Endothelial cell of umbilical vein (primary cell): ENCODE measurements at regions of chr1 and their contacts with region 1.

Region 1: GRCh38 chr1:28877132-28877781 is 37.1 kb upstream of the EPB41 start:
- DNase-seq: peak; percentile 73
- H3K4me3 ChIP-seq: no peak overlapping the region
- H3K27ac ChIP-seq: no peak overlapping the region
- H3K4me1 ChIP-seq: no peaks in the 10 kb centered on the region
- H3K27me3 ChIP-seq: no peaks in the 10 kb centered on the region
- CTCF ChIP-seq: peak; percentile 86 to 92
- POLR2A ChIP-seq: no peak

Region 2: DNA sequence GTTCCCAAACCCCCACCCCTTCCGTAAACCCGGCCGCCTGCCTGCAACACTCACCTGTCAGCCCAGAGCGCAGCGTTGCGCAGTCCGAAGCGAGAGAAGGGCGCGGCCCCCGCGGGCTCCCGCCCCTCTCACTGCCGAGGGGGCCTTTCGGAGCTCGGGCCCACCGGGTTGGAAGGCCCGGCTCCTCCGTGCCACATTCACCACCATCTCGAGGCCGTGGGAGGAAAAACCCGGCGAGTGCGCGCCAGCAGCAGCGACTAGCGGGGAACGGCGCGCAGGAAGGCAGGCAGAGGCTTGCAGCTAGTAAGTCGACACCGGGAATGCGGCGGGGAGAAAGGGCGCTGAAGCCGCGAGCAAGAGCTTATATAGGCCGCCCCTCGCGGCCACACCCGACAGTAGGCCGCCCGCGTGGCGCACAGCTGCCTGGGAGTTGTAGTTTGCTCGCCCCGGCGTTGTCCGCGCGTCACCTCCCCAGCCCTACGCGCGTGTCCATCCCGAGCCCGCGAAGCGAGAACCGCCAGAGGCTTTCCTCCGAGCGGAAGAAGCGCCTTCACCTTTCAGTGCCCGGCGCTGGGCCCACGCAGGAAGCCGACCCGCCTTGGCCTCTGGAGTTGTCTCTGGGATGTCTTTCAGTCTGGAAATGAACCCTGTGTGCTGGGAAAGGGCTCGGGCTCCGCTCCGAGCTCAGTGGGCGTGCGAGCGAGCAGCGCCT is 295.6 kb before region 1 on chr1:
- CTCF ChIA-PET with region 1: interaction called, 12 read pairs
- POLR2A ChIA-PET with region 1: interaction called, 5 read pairs
- dilution Hi-C with region 1: no loop called
- intact Hi-C with region 1: no loop called
- DNase-seq: peak; percentile 97
- H3K4me3 ChIP-seq: peak overlapping the region; percentile 75 to 98 (median 92)
- H3K27ac ChIP-seq: peak overlapping the region; percentile 65
- H3K4me1 ChIP-seq: peaks cover 31% of the 10 kb centered on the region
- H3K27me3 ChIP-seq: no peaks in the 10 kb centered on the region
- CTCF ChIP-seq: no peak
- POLR2A ChIP-seq: peak; percentile 100

Region 3: DNA sequence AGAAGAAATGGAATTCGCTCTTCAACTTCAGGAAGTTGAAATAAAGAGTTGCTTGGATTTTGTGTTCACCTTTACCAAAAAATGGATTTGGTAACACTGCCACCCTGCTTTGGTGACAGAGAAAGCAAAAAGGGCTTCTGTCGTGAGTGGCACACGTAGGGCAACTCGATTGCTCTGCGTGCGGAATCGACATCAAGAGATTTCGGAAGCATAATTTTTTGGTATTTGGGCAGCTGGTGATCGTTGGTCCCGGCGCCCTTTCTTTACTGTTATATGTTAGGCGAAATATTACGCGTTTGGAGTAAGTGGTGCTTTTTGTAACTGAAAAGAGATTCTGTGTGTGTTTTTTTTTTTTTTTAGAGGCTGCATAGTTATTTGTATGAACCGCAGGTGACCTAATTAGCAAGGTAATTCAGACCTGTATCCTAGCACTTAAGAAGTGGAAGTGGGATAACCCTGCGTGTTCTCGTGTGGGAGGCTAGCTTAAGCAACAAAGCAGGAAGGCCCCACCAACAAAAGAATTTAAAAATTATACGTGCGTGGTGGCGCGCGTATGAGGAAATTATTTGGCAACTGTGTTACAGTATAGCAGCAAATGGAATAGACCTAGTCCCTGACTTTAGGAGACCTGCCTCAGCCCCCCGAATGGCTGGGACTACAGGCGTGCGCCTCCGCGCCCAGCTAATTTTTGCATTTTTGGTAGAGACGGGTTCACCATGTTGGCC is 228.6 kb before region 1 on chr1 and contains the start of gene RNU11:
- CTCF ChIA-PET with region 1: interaction called, 13 read pairs
- POLR2A ChIA-PET with region 1: interaction called, 5 read pairs
- dilution Hi-C with region 1: no loop called
- intact Hi-C with region 1: loop called (anchors 1 kb)
- DNase-seq: peak; percentile 97
- H3K4me3 ChIP-seq: peak within 1 kb of the TSS in 2 of 3 experiments; percentile 18 to 20
- H3K27ac ChIP-seq: peak within 1 kb of the TSS; percentile 97
- H3K4me1 ChIP-seq: peaks cover 10% of the 10 kb centered on the region
- H3K27me3 ChIP-seq: no peaks in the 10 kb centered on the region
- CTCF ChIP-seq: no peak
- POLR2A ChIP-seq: peak; percentile 100
- total RNA-seq, gene RNU11: not detected in 2 replicates

Region 4: DNA sequence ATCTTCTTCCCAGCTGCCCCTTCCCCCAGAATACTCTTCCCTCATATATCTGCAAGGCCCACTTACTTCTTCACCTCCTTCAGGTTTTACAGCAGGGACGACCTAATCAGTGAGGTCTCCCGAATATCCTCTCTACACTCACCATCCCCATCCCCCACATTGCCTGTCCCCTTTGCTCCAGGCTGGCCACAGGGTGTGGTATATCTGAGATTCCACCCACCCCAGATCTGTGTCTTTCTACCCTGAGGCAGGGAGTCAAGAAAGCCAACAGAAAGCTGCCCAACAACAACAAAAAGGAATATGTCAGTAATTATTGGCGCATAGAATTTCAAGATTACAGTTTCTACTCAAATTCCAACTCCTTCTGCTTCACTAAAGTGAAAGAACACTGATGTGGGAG is 95.2 kb before region 1 on chr1:
- CTCF ChIA-PET with region 1: interaction called, 259 read pairs
- POLR2A ChIA-PET with region 1: no interaction called
- dilution Hi-C with region 1: no loop called
- intact Hi-C with region 1: loop called (anchors 1 kb)
- DNase-seq: no peak
- H3K4me3 ChIP-seq: no peak overlapping the region
- H3K27ac ChIP-seq: no peak overlapping the region
- H3K4me1 ChIP-seq: no peaks in the 10 kb centered on the region
- H3K27me3 ChIP-seq: no peaks in the 10 kb centered on the region
- CTCF ChIP-seq: no peak
- POLR2A ChIP-seq: no peak

Region 5: DNA sequence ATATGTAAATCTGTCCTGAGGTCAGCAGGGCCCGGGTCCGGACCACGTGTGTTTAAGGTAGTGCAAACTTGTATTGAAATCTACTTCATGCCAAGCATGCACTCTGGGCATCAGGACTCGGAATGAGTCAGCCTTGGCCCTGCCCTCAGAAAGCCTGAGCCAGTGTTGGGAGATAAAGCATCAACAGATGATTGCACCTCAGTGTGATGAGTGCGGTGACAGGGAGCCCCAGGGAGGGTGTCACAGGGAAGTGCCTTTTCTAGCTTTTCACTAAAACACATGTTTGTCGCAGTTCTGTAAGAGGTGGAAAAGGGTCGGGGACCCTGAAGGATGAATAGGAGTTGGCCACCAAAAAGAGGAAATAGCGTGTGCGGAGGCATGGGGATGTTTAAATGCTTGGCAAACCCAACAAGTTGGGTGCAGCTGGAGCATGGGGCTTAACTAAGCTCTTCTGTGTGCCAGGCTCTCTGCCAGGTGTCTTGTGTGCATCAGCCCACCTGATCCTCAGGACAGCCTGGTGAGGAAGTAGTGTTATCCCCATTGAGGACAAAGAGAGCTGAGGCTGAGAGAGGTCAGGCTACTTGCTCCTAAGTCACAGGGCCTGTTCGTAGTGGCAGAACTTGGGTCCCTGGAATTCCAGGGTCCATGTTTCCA is 11.1 kb before region 1 on chr1:
- CTCF ChIA-PET with region 1: interaction called, 47 read pairs
- POLR2A ChIA-PET with region 1: no interaction called
- dilution Hi-C with region 1: no loop called
- intact Hi-C with region 1: no loop called
- DNase-seq: no peak
- H3K4me3 ChIP-seq: no peak overlapping the region
- H3K27ac ChIP-seq: no peak overlapping the region
- H3K4me1 ChIP-seq: no peaks in the 10 kb centered on the region
- H3K27me3 ChIP-seq: no peaks in the 10 kb centered on the region
- CTCF ChIP-seq: no peak
- POLR2A ChIP-seq: no peak

Region 6: DNA sequence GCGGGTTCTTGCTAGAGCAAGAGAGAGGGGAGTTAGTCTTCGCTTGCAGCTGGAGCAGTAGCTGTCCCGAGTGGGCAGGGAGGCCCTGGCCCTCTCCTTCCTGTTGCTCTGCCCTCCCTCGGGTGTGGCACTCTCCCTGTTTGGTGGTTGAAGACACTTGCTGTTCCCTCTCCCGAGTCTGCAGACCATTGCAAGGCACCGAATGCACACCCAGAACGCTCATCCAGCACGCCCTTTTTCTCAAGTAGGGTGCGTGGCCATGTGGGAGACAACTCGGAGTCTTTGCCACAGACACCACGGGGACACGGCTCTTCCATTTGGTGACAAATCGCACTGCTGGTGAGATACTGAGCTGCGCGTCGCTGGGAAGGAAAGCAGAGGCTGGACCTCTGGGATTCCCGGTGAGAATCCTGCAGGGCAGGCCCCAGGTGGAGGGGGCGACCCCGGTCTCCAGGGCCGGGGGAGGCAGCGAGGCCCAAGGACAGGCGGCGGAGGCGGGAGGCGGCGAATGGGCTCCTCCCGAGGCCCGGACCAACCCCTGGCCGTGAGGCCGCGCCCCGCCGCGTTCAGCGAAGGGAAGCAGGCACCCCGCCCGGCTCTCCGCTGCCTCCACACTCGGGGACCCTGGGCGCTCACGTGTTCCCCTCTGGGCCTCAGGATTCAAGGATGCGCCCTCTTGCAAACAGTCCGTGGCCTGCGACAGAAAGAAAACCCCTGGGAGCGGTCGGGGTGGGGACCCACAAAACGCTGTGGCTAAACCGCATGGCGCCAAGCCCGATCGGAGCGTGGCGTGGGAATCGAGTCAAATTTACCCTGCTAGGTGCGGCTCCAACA is 256.8 kb after region 1 on chr1:
- CTCF ChIA-PET with region 1: no interaction called
- POLR2A ChIA-PET with region 1: no interaction called
- dilution Hi-C with region 1: no loop called
- intact Hi-C with region 1: no loop called
- DNase-seq: no peak
- H3K4me3 ChIP-seq: no peak overlapping the region
- H3K27ac ChIP-seq: no peak overlapping the region
- H3K4me1 ChIP-seq: no peaks in the 10 kb centered on the region
- H3K27me3 ChIP-seq: peaks cover 0 to 3% of the 10 kb centered on the region in 2 experiments
- CTCF ChIP-seq: no peak
- POLR2A ChIP-seq: no peak

Region 7: DNA sequence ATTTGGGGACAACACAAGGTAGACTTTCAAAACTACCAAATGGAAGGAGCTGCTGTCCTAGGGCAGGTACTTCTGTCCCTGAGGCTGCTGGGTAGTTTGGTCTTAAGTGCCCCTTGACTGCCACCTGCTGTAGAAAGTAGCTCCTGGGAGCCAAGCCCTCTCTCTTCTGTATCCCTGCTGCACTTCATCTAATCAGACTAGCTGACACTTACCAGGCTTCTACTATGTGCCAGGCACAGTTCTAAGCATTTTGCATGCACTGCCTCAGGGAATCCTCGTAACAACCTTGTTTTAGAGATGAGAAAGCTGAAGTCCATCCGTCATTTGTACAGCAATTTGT is 320.3 kb after region 1 on chr1:
- CTCF ChIA-PET with region 1: interaction called, 133 read pairs
- POLR2A ChIA-PET with region 1: no interaction called
- dilution Hi-C with region 1: no loop called
- intact Hi-C with region 1: loop called (anchors 1 kb)
- DNase-seq: peak; percentile 39
- H3K4me3 ChIP-seq: no peak overlapping the region
- H3K27ac ChIP-seq: no peak overlapping the region
- H3K4me1 ChIP-seq: peaks cover 8% of the 10 kb centered on the region
- H3K27me3 ChIP-seq: no peaks in the 10 kb centered on the region
- CTCF ChIP-seq: peak; percentile 24 to 51
- POLR2A ChIP-seq: no peak